HepG2 (cell line): ENCODE measurements at regions of chr12 and their contacts with region 1.

Region 1: GRCh38 chr12:103840876-103841689 is at the start of gene NT5DC3:
- DNase-seq: peak; percentile 63
- ATAC-seq: peak; percentile 79
- H3K4me3 ChIP-seq: peak within 1 kb of the TSS; percentile 74 to 87 (median 75)
- H3K27ac ChIP-seq: peak within 1 kb of the TSS; percentile 61
- H3K4me1 ChIP-seq: peaks cover 48% of the 10 kb centered on the region
- H3K27me3 ChIP-seq: no peaks in the 10 kb centered on the region; a peak in 1 of 5 replicates
- CTCF ChIP-seq: peak; percentile 38; the same call in 1 of the 2 replicates
- EP300 ChIP-seq: no peak
- POLR2A ChIP-seq: peak; percentile 82 to 92
- RAD21 ChIP-seq: peak; percentile 66
- total RNA-seq, gene NT5DC3: 6.6 and 7.4 TPM in 2 replicates

Region 2: GRCh38 chr12:103688376-103689063 is 152.6 kb before region 1 on chr12:
- CTCF ChIA-PET with region 1: no interaction called
- POLR2A ChIA-PET with region 1: no interaction called
- in situ Hi-C with region 1: no loop called
- intact Hi-C with region 1: no loop called
- DNase-seq: no peak
- ATAC-seq: no peak
- H3K4me3 ChIP-seq: no peak overlapping the region
- H3K27ac ChIP-seq: no peak overlapping the region
- H3K4me1 ChIP-seq: no peaks in the 10 kb centered on the region
- H3K27me3 ChIP-seq: 0 out of 5 replicates have a peak, but pooled peaks cover 0 to 3% of the 10 kb centered on the region in 2 experiments
- CTCF ChIP-seq: no peak
- EP300 ChIP-seq: no peak
- POLR2A ChIP-seq: no peak
- RAD21 ChIP-seq: no peak

Region 3: GRCh38 chr12:103799870-103800771 is 41.0 kb before region 1 on chr12:
- CTCF ChIA-PET with region 1: no interaction called
- POLR2A ChIA-PET with region 1: interaction called, 5 read pairs
- in situ Hi-C with region 1: no loop called
- intact Hi-C with region 1: loop called (anchors 5 kb)
- DNase-seq: peak; percentile 47
- ATAC-seq: peak; percentile 76
- H3K4me3 ChIP-seq: no peak overlapping the region
- H3K27ac ChIP-seq: peak overlapping the region; percentile 41
- H3K4me1 ChIP-seq: peaks cover 43% of the 10 kb centered on the region
- H3K27me3 ChIP-seq: no peaks in the 10 kb centered on the region
- CTCF ChIP-seq: no peak
- EP300 ChIP-seq: no peak; a peak in 1 of 4 replicates
- POLR2A ChIP-seq: no peak
- RAD21 ChIP-seq: no peak

Region 4: GRCh38 chr12:103855036-103855712 is 14.1 kb after region 1 on chr12:
- CTCF ChIA-PET with region 1: no interaction called
- POLR2A ChIA-PET with region 1: interaction called, 7 read pairs
- in situ Hi-C with region 1: no loop called
- intact Hi-C with region 1: loop called (anchors 2 kb)
- DNase-seq: peak; percentile 65
- ATAC-seq: peak; percentile 75
- H3K4me3 ChIP-seq: peak overlapping the region in 1 of 3 experiments; percentile 9; a peak in 1 of 6 replicates
- H3K27ac ChIP-seq: peak overlapping the region; percentile 25
- H3K4me1 ChIP-seq: peaks cover 81% of the 10 kb centered on the region
- H3K27me3 ChIP-seq: peaks cover 0 to 12% of the 10 kb centered on the region in 2 experiments; a peak in 1 of 5 replicates
- CTCF ChIP-seq: no peak
- EP300 ChIP-seq: peak in 1 of 2 experiments; percentile 66; a peak in 2 of 4 replicates
- POLR2A ChIP-seq: no peak
- RAD21 ChIP-seq: no peak

Region 5: DNA sequence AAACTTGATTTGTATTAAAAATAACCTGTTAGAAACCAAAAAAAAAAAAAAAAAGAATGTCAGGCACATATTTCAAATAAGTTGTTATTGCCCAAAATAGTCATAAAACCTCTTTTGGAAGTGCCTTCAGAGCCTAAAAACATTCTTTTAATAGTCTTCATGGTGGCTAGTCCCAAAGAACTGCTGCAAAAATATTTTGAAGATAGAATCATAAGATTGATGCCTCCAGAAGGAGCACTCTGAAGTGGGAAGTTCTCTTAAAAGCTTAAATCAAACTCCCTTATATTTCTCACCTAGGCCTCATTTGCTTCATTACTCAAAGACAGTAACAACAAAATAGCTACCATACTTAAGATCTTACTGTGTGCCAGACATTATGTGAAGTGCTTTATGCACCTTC is 27.1 kb after region 1 on chr12:
- CTCF ChIA-PET with region 1: no interaction called
- POLR2A ChIA-PET with region 1: interaction called, 4 read pairs
- in situ Hi-C with region 1: no loop called
- intact Hi-C with region 1: loop called (anchors 2 kb)
- DNase-seq: no peak
- ATAC-seq: no peak
- H3K4me3 ChIP-seq: no peak overlapping the region
- H3K27ac ChIP-seq: no peak overlapping the region
- H3K4me1 ChIP-seq: peaks cover 37% of the 10 kb centered on the region
- H3K27me3 ChIP-seq: no peaks in the 10 kb centered on the region
- CTCF ChIP-seq: no peak
- EP300 ChIP-seq: no peak
- POLR2A ChIP-seq: no peak
- RAD21 ChIP-seq: no peak

Region 6: DNA sequence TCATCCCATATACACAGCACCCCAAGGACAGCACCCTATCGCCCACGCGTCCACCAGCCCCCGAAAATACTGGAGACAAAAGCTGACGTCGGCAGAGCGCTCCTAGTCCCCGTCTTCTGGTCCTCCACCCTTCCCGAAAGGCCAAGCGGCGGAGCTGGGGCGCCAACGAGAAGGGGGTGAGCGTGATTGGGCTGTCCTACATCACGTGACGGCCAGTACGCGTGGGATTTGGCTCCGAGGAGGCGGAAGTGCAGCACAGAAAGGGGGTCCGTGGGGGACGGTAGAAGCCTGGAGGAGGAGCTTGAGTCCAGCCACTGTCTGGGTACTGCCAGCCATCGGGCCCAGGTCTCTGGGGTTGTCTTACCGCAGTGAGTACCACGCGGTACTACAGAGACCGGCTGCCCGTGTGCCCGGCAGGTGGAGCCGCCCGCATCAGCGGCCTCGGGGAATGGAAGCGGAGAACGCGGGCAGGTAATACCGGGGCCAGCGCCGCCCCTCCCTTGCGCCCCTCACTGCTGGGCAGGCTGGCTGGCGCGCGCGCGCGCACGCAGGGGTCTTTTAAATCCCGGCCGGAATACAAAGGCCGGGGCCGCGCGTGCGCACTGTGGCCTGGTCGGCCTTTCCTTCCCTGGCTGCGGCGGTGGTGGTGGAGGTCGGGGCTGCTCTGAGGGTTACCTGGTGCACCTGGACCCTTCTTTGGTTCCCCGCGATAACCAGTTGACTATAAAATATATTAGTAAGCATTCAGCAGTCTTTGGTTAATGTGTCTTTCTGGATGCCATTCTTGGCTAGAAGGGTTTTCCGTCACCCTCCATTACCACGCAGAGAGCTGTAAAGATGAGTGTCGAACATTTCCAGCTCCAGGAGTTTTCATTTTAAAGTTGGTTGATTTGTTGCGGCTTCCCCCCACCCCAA is 124.8 kb after region 1 on chr12 and contains the start of gene TDG:
- CTCF ChIA-PET with region 1: no interaction called
- POLR2A ChIA-PET with region 1: interaction called, 11 read pairs
- in situ Hi-C with region 1: no loop called
- intact Hi-C with region 1: no loop called
- DNase-seq: peak; percentile 98
- ATAC-seq: peak; percentile 99
- H3K4me3 ChIP-seq: peak within 1 kb of the TSS; percentile 68 to 98 (median 82)
- H3K27ac ChIP-seq: peak within 1 kb of the TSS; percentile 86
- H3K4me1 ChIP-seq: peaks cover 62% of the 10 kb centered on the region
- H3K27me3 ChIP-seq: no peaks in the 10 kb centered on the region; a peak in 1 of 5 replicates
- CTCF ChIP-seq: peak; percentile 48; the same call in 1 of the 2 replicates
- EP300 ChIP-seq: no peak
- POLR2A ChIP-seq: peak; percentile 92 to 97
- RAD21 ChIP-seq: peak; percentile 57
- total RNA-seq, gene TDG: 19.5 and 24.0 TPM in 2 replicates